Esophagus muscularis mucosa (tissue), 4 donors: ENCODE measurements at regions of chr9 and their contacts with region 1.

Region 1: GRCh38 chr9:134738869-134739659 is 97.5 kb downstream of the COL5A1 start:
- DNase-seq: peak; percentile 94
- H3K4me3 ChIP-seq: no peak overlapping the region
- H3K27ac ChIP-seq: peak overlapping the region in 1 of 4 donors; percentile 33
- H3K4me1 ChIP-seq: peaks cover 16 to 50% (median 49%) of the 10 kb centered on the region in 4 donors
- H3K27me3 ChIP-seq: no peaks in the 10 kb centered on the region
- CTCF ChIP-seq: peak; percentile 95 to 98 (median 96)
- EP300 ChIP-seq: no peak
- POLR2A ChIP-seq: no peak

Region 2: GRCh38 chr9:134178768-134179551 is 560.1 kb before region 1 on chr9:
- intact Hi-C with region 1: loop called (anchors 10 kb)
- DNase-seq: no peak
- H3K4me3 ChIP-seq: no peak overlapping the region
- H3K27ac ChIP-seq: peak overlapping the region in 1 of 4 donors; percentile 30
- H3K4me1 ChIP-seq: peaks cover 18 to 36% (median 26%) of the 10 kb centered on the region in 4 donors
- H3K27me3 ChIP-seq: peaks cover 0 to 43% (median 10%) of the 10 kb centered on the region in 4 donors
- CTCF ChIP-seq: no peak
- EP300 ChIP-seq: no peak
- POLR2A ChIP-seq: no peak

Region 3: GRCh38 chr9:134449221-134449894 is 289.7 kb before region 1 on chr9:
- intact Hi-C with region 1: loop called (anchors 5 kb)
- DNase-seq: peak; percentile 98
- H3K4me3 ChIP-seq: no peak overlapping the region
- H3K27ac ChIP-seq: no peak overlapping the region
- H3K4me1 ChIP-seq: peaks cover 0 to 8% (median 2%) of the 10 kb centered on the region in 4 donors
- H3K27me3 ChIP-seq: no peaks in the 10 kb centered on the region
- CTCF ChIP-seq: peak; percentile 83 to 97 (median 86)
- EP300 ChIP-seq: no peak
- POLR2A ChIP-seq: no peak

Region 4: GRCh38 chr9:134461426-134461982 is 277.6 kb before region 1 on chr9:
- intact Hi-C with region 1: no loop called
- DNase-seq: no peak
- H3K4me3 ChIP-seq: no peak overlapping the region
- H3K27ac ChIP-seq: no peak overlapping the region
- H3K4me1 ChIP-seq: peaks cover 15 to 32% (median 27%) of the 10 kb centered on the region in 4 donors
- H3K27me3 ChIP-seq: no peaks in the 10 kb centered on the region
- CTCF ChIP-seq: no peak
- EP300 ChIP-seq: no peak
- POLR2A ChIP-seq: no peak

Region 5: GRCh38 chr9:134698587-134699342 is 40.3 kb before region 1 on chr9:
- intact Hi-C with region 1: loop called (anchors 1 kb)
- DNase-seq: no peak
- H3K4me3 ChIP-seq: no peak overlapping the region
- H3K27ac ChIP-seq: peak overlapping the region; percentile 15 to 43 (median 32)
- H3K4me1 ChIP-seq: peaks cover 5 to 57% (median 40%) of the 10 kb centered on the region in 4 donors
- H3K27me3 ChIP-seq: no peaks in the 10 kb centered on the region
- CTCF ChIP-seq: peak; percentile 91 to 97 (median 96)
- EP300 ChIP-seq: no peak
- POLR2A ChIP-seq: no peak

Region 6: GRCh38 chr9:134912126-134912968 is 173.3 kb after region 1 on chr9:
- intact Hi-C with region 1: no loop called
- DNase-seq: no peak
- H3K4me3 ChIP-seq: no peak overlapping the region
- H3K27ac ChIP-seq: no peak overlapping the region
- H3K4me1 ChIP-seq: no peaks in the 10 kb centered on the region
- H3K27me3 ChIP-seq: peaks cover 0 to 66% (median 3%) of the 10 kb centered on the region in 4 donors
- CTCF ChIP-seq: no peak
- EP300 ChIP-seq: no peak
- POLR2A ChIP-seq: no peak